ENCODE measurements at regions of chr1 and their contacts with region 1.

Region 1: DNA sequence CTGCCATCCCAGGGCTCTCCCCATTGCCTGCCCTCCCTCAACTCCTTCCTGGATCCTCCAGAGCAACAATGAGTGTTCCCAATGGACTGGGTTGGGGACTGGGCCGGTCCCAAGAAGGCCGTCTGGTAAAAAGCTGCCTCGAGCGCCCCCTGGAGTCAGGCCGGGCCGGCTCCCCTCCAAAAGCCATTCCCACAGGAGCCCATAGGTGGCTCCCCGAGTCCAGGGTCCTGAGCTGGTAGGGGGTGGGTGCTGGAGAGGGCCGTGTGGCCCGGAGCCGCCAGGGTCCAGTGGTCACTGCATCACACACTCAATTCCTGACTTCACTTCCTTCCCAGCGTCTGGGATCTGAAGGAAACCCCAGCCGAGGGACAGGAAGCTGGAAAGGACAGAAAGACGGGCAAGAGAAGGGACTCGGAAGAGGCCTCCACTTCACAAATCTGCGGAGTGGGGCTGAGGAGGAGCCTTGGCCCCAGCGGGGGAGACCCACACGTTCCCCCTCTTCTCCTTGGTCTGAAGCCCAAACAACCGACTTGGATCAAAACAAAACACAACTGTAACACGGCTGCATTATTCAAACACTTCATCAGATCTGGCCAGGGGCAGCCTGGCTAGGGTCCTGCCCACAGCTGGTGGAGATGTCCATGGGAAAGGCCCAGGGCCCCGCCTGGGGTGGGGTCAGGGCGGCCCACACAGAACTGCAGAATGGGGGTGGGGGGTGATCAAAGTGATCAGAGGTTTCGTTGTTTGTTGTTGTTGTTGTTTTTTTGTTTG is 10.9 kb upstream of the ALDH4A1 start:
- DNase-seq: peak; percentile 89 to 95 (median 94)
- ATAC-seq: peak; percentile 92
- H3K4me3 ChIP-seq: no peak overlapping the region
- H3K27ac ChIP-seq: no peak overlapping the region
- H3K4me1 ChIP-seq: peaks cover 14 to 34% of the 10 kb centered on the region in 2 experiments
- H3K27me3 ChIP-seq: peaks cover 19 to 34% of the 10 kb centered on the region in 2 experiments
- CTCF ChIP-seq: peak; percentile 100
- EP300 ChIP-seq: no peak
- POLR2A ChIP-seq: no peak
- RAD21 ChIP-seq: peak; percentile 94 to 99

Region 2: DNA sequence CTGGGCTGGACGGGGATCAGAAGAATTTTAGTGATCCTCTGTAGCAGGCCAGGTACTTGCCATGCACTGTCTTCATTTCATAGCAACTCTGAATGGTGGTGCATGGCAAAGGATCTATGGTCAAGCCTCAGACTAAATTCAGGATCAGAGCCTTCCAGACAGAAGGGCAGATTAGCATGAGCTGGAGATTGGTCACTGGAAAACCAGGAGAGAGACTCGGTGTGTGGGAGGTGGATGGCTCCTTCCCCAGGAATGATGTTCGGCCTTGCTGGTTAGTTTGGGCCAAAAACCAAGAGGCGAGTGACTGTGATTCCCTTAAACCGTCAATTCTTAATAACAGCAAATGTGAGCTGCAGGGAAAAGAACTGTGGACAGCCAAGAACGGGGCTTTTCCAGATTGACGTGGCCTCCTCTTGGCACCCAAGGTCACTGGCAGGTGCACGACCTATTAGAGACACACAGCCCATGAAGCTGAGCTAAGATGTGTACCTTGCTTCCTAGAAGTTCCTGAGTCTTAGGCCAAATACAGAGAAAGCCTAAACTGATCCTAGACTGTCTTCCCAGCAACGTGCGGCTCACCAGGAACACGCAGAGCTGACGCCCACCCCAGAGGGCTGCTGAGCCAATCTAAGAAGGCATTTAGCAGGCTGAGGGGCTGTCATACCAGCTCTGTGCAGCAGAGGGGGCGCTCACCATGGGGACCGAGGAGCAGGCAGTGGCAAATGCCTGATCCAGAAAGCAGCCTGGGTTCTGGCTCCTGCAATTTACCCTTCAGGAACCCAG is 29.4 kb before region 1 on chr1:
- CTCF ChIA-PET with region 1: interaction called, 108 read pairs
- POLR2A ChIA-PET with region 1: no interaction called
- in situ Hi-C with region 1: no loop called
- intact Hi-C with region 1: loop called (anchors 1 kb)
- DNase-seq: peak; percentile 79 to 82 (median 82)
- ATAC-seq: peak; percentile 94
- H3K4me3 ChIP-seq: no peak overlapping the region
- H3K27ac ChIP-seq: no peak overlapping the region
- H3K4me1 ChIP-seq: peaks cover 0 to 15% of the 10 kb centered on the region in 2 experiments; a peak in 1 of 5 replicates
- H3K27me3 ChIP-seq: no peaks in the 10 kb centered on the region
- CTCF ChIP-seq: peak; percentile 93 to 98 (median 97)
- EP300 ChIP-seq: no peak
- POLR2A ChIP-seq: no peak
- RAD21 ChIP-seq: peak; percentile 90 to 97

Region 3: DNA sequence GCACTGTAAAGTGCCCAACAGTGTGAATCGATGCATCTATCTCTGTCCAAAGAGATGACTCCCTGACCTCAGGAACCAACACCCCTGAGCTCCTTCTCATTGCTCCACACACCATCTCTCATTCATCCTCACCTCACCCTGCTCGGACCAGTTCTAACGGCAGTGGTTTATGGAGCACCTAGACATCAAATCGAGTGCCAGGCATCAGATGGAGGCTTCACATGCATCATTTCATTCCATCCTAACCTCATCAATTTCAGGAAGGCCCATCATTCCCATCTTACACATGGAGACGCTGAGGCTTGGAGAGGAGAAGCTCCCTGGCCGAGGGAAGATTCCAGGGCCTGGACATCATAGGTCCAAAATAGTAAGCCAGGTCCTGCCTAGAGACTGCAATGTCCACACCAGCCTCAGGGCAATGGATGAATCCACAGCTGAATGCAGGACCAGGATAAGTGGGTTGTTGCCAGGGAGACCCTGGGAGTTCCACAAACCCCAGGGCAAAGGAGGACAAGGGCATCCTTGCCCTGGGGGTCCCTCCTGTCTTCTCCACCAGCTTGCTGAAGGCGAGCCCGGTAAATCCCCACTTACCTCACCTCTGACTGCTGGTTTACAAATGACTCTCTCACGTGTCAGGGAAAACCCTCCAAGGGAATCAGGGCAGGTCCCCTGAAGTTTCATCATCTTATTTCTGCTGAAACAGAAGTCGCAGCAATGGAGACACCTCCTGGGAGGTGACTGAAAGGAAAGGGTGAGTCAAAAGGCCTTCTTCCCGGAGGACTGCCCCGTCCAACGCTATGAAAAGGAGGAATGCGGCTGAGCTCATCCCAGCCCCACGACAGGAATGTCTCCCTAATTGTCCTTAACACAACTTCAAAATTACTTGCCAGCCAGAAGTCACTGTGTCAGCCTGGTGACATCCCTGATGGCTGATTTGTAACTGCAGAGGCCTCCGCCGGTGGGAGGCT is 52.2 kb after region 1 on chr1:
- CTCF ChIA-PET with region 1: no interaction called
- POLR2A ChIA-PET with region 1: no interaction called
- in situ Hi-C with region 1: no loop called
- intact Hi-C with region 1: no loop called
- DNase-seq: no peak
- ATAC-seq: no peak; the same call in 2 of the 3 replicates
- H3K4me3 ChIP-seq: no peak overlapping the region
- H3K27ac ChIP-seq: no peak overlapping the region
- H3K4me1 ChIP-seq: no peaks in the 10 kb centered on the region
- H3K27me3 ChIP-seq: peaks cover 59 to 69% of the 10 kb centered on the region in 2 experiments
- CTCF ChIP-seq: no peak
- EP300 ChIP-seq: no peak
- POLR2A ChIP-seq: no peak
- RAD21 ChIP-seq: no peak